ENCODE measurements at regions of chr20 and their contacts with region 1.

Region 1: DNA sequence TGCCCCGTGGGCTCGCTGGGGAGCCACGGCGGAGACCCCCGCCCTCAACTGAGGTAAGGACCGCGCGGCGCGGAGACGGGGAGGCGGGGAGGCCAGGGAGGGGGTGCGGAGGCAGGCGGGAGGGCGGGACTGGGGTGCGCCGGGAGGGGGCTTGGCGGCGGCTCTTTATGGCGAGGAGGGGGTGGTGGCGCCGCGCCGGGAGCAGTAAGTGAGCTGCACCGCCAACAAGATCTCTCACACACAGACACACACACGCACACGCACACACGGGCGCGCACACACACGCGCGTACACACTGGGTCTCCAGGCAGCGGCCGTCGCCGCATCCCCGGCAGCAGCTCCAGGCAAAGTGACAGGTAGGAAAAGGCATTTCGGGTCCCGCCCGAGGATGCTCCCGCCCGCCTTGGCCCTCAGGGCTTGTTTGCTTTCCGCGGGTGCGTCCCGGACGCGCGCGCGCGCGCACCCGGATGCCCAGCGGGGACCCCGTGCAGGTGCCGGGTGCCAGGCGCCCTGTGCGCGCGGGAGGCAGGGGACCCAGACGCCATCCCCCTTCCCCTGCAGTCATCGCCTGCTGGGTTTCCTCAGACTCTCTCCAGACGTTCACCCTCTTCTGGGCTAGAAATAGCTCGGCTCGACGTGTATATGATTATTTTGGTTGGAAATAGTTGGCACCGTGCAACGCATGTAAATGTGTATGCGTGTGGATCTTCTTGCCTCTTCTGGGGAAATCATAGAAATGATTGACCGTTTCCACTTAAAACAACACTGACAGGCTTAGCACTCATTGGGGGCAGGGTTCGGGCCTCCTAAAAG is at the start of gene PLCB4:
- DNase-seq: peak; percentile 73
- H3K4me3 ChIP-seq: peak within 1 kb of the TSS; percentile 65 to 98 (median 69)
- H3K27ac ChIP-seq: peak within 1 kb of the TSS; percentile 75 to 91 (median 83)
- H3K4me1 ChIP-seq: peaks cover 0 to 20% (median 7%) of the 10 kb centered on the region in 4 donors
- H3K27me3 ChIP-seq: no peaks in the 10 kb centered on the region
- CTCF ChIP-seq: no peak
- EP300 ChIP-seq: no peak
- POLR2A ChIP-seq: no peak
- total RNA-seq, gene PLCB4: 12.0 to 21.0 (median 13.3) TPM

Region 2: DNA sequence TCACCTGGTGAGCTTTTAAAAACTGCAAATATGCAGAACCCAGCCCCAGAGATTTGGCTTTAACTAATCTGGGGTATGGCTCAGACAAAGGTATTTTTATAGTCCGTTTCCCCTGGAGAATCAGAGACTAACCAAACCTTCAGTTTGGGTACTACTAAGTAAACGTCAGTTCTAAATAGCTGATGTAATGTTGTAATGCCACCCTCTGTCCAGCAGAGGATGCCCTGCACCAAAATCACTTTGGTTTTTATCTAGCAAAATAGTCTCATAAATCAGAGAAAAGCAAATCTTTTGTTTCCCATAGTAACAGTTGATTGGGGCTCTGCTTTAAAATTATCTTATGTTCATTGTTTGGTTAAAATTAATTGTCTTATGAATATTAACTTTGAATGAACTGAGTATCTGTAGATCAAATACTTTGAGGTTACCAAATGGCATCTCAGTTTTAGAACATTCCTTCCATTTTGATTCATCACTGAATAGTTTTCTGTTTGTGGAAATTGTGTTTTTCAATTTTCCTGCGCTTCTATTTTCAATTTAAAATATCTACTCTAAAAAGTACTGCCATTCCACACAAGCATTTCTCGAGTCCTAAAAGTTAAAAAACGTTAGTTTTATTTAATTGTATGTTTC is 278.5 kb before region 1 on chr20:
- intact Hi-C with region 1: loop called (anchors 5 kb)
- DNase-seq: no peak
- H3K4me3 ChIP-seq: no peak overlapping the region
- H3K27ac ChIP-seq: peak overlapping the region in 1 of 4 donors; percentile 26
- H3K4me1 ChIP-seq: peaks cover 0 to 19% (median 7%) of the 10 kb centered on the region in 4 donors
- H3K27me3 ChIP-seq: no peaks in the 10 kb centered on the region
- CTCF ChIP-seq: peak; percentile 79 to 99 (median 94)
- EP300 ChIP-seq: no peak
- POLR2A ChIP-seq: no peak

Region 3: DNA sequence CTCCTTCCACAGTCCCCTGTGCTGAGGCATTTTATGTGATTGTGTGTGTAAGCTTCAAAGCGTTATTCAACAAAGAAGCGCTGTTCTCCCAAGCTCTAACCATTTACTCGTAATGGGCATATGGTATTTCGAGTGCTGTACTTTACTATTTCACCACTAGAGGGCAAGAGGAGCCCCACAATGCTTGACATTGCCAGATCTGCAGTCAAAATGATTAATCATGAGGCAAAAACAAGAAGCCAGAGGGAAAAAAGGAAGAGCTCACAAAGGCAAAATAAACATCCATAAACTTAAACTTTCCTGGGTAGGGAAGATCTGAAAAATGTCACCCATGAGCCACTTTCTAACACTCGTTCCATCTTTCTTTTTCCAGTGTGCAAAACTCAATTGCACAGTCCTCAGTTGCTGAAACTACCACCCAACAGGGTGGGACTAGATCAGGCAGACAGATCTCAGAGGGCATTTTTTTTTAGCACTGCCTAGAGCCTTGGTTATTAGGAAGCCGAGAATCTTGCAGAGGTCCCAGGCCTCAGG is 215.2 kb before region 1 on chr20:
- intact Hi-C with region 1: loop called (anchors 5 kb)
- DNase-seq: no peak
- H3K4me3 ChIP-seq: peak overlapping the region in 1 of 4 donors; percentile 1
- H3K27ac ChIP-seq: peak overlapping the region; percentile 38 to 70 (median 60)
- H3K4me1 ChIP-seq: peaks cover 0 to 41% (median 8%) of the 10 kb centered on the region in 4 donors
- H3K27me3 ChIP-seq: no peaks in the 10 kb centered on the region
- CTCF ChIP-seq: peak; percentile 61 to 90 (median 84)
- EP300 ChIP-seq: no peak
- POLR2A ChIP-seq: no peak

Region 4: DNA sequence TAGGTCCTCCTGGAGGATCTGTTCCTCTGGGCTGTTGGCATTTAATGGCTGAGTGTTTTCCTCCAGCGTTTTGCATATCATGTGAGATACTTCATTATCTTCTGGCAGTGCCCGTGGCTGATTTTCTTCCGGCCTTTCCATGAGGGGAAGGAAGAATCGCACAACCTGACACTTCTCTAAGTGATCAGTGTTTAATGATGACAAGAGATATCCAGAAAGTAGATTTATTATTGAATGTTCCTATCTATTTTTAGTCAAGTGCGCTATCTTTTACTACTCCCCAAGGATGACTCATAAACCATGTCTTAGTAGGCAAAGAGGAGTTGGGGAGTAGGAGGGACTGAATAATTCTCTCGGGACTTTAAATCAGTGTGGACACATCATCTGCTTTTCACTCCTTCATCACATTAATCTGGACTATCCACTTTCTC is 149.5 kb after region 1 on chr20:
- intact Hi-C with region 1: loop called (anchors 2 kb)
- DNase-seq: no peak
- H3K4me3 ChIP-seq: no peak overlapping the region
- H3K27ac ChIP-seq: peak overlapping the region in 3 of 4 donors; percentile 54 to 74 (median 62)
- H3K4me1 ChIP-seq: peaks cover 0 to 32% (median 18%) of the 10 kb centered on the region in 4 donors
- H3K27me3 ChIP-seq: no peaks in the 10 kb centered on the region
- CTCF ChIP-seq: no peak
- EP300 ChIP-seq: no peak
- POLR2A ChIP-seq: no peak

Measured in sigmoid colon (tissue), 7 donors.